ENCODE measurements at regions of chr9 and their contacts with region 1.

Region 1: GRCh38 chr9:114746601-114747346 is 59.1 kb downstream of the TNFSF15 start:
- DNase-seq: no peak
- H3K4me3 ChIP-seq: no peak overlapping the region
- H3K4me3 Mint-ChIP-seq: no peak overlapping the region
- H3K27ac Mint-ChIP-seq: no peak overlapping the region
- H3K4me1 ChIP-seq: no peaks in the 10 kb centered on the region
- H3K4me1 Mint-ChIP-seq: no peaks in the 10 kb centered on the region
- H3K27me3 ChIP-seq: no peaks in the 10 kb centered on the region
- H3K27me3 Mint-ChIP-seq: no peaks in the 10 kb centered on the region
- CTCF ChIP-seq: no peak

Region 2: GRCh38 chr9:114580698-114581097 is 166.1 kb before region 1 on chr9:
- CTCF ChIA-PET with region 1: no interaction called
- POLR2A ChIA-PET with region 1: no interaction called
- intact Hi-C with region 1: no loop called
- DNase-seq: no peak
- H3K4me3 ChIP-seq: no peak overlapping the region
- H3K4me3 Mint-ChIP-seq: no peak overlapping the region
- H3K27ac Mint-ChIP-seq: no peak overlapping the region
- H3K4me1 ChIP-seq: no peaks in the 10 kb centered on the region
- H3K4me1 Mint-ChIP-seq: no peaks in the 10 kb centered on the region
- H3K27me3 ChIP-seq: no peaks in the 10 kb centered on the region
- H3K27me3 Mint-ChIP-seq: no peaks in the 10 kb centered on the region
- CTCF ChIP-seq: no peak

Region 3: DNA sequence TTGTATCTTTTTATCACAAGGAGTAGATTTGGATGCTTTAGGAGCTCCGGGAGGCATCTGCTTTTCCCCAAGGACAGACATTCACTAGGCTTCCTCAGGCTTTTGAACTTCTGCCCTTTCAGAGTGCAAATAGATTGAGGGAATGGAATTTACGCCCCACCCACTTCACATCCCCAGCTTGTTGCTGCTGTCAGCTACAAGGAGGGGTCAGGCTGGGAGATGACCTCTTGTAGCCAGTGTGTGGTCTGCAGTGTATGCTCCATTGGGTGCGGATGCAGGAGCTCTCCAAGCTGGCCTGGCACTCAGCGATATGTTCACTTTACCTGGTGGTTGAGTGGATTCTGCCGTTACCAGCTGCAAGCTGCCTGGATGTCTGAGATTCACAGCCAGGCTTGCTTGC is 52.7 kb after region 1 on chr9:
- CTCF ChIA-PET with region 1: no interaction called
- POLR2A ChIA-PET with region 1: no interaction called
- intact Hi-C with region 1: loop called (anchors 1 kb)
- DNase-seq: peak; percentile 77 to 88
- H3K4me3 ChIP-seq: no peak overlapping the region
- H3K4me3 Mint-ChIP-seq: no peak overlapping the region
- H3K27ac Mint-ChIP-seq: no peak overlapping the region
- H3K4me1 ChIP-seq: peaks cover 37% of the 10 kb centered on the region
- H3K4me1 Mint-ChIP-seq: peaks cover 34% of the 10 kb centered on the region
- H3K27me3 ChIP-seq: no peaks in the 10 kb centered on the region
- H3K27me3 Mint-ChIP-seq: peaks cover 5% of the 10 kb centered on the region
- CTCF ChIP-seq: no peak

Region 4: GRCh38 chr9:114805670-114806525 is 59.1 kb after region 1 on chr9 and contains the start of gene TNFSF15:
- CTCF ChIA-PET with region 1: no interaction called
- POLR2A ChIA-PET with region 1: no interaction called
- intact Hi-C with region 1: loop called (anchors 1 kb)
- DNase-seq: peak; percentile 63 to 80
- H3K4me3 ChIP-seq: no peak within 1 kb of the TSS
- H3K4me3 Mint-ChIP-seq: peak within 1 kb of the TSS; percentile 56
- H3K27ac Mint-ChIP-seq: peak within 1 kb of the TSS; percentile 25
- H3K4me1 ChIP-seq: peaks cover 40% of the 10 kb centered on the region
- H3K4me1 Mint-ChIP-seq: peaks cover 29% of the 10 kb centered on the region
- H3K27me3 ChIP-seq: no peaks in the 10 kb centered on the region
- H3K27me3 Mint-ChIP-seq: peaks cover 6% of the 10 kb centered on the region
- CTCF ChIP-seq: no peak
- total RNA-seq, gene TNFSF15: 0.66 and 1.00 TPM in 2 replicates

Region 5: GRCh38 chr9:114852050-114852594 is 105.3 kb after region 1 on chr9:
- CTCF ChIA-PET with region 1: no interaction called
- POLR2A ChIA-PET with region 1: no interaction called
- intact Hi-C with region 1: loop called (anchors 2 kb)
- DNase-seq: peak; percentile 5 to 43
- H3K4me3 ChIP-seq: no peak overlapping the region
- H3K4me3 Mint-ChIP-seq: no peak overlapping the region
- H3K27ac Mint-ChIP-seq: no peak overlapping the region
- H3K4me1 ChIP-seq: peaks cover 26% of the 10 kb centered on the region
- H3K4me1 Mint-ChIP-seq: peaks cover 24% of the 10 kb centered on the region
- H3K27me3 ChIP-seq: no peaks in the 10 kb centered on the region
- H3K27me3 Mint-ChIP-seq: no peaks in the 10 kb centered on the region
- CTCF ChIP-seq: no peak

Measured in Caco-2 (cell line).